GM18951 (cell line): ENCODE measurements at regions of chr17 and their contacts with region 1.

Region 1: DNA sequence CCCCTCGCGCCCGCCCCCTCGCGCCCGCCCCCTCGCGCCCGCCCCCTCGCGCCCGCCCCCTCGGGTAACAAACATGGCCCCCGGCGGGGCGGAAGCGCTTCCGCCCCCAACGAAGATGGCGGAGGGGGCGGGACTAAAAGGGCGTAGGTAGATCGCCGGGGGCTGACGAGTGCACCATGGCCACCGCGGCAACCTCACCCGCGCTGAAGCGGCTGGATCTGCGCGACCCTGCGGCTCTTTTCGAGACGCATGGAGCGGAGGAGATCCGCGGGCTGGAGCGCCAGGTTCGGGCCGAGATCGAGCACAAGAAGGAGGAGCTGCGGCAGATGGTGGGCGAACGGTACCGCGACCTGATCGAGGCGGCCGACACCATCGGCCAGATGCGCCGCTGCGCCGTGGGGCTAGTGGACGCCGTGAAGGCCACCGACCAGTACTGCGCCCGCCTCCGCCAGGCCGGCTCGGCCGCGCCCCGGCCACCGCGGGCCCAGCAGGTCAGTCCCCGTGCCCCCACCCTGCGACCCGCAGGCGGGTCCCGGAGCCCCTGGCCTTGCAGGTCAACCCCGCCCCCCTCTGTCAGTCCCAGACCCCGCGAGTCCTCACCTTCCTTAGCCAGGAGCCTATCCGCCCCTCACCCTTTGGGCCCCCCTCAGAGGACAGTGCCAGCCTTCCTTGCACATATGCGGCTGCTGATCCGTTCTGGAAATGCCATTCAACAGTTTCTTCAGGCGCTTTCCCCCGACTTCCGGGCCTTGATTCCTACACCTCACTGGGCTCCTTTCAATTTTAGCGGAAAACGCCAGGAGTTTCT is at the start of gene COG1:
- POLR2A ChIP-seq: peak; percentile 51

Region 2: GRCh38 chr17:72545766-72546165 is 647.3 kb before region 1 on chr17:
- in situ Hi-C with region 1: no loop called
- POLR2A ChIP-seq: no peak

Region 3: GRCh38 chr17:72725433-72726068 is 467.5 kb before region 1 on chr17:
- in situ Hi-C with region 1: loop called (anchors 25 kb)
- POLR2A ChIP-seq: no peak